ENCODE measurements at regions of chr5 and their contacts with region 1.

Region 1: DNA sequence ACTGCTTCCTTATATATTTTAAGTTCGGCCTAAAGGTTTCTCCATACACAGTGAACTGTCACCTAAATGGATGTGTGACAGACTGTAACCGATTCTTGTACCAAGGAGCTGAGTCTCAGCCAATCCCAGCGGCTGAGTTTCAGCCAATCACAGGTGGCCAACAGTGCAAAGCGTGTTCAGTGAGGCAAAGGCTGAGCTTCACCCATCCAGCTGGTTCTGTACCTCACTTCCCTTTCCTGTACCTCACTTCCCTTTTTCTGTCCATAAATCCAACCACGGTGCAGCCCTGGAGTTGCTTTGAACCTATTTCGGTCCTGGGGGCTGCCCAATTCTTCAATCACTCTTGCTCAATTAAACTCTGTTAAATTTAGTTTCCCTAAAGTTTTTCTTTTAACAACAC is 15.7 kb upstream of the TBC1D9B start:
- H3K4me3 Mint-ChIP-seq: no peak overlapping the region
- H3K27ac Mint-ChIP-seq: no peak overlapping the region
- H3K4me1 Mint-ChIP-seq: peaks cover 13% of the 10 kb centered on the region
- H3K27me3 Mint-ChIP-seq: no peaks in the 10 kb centered on the region

Region 2: DNA sequence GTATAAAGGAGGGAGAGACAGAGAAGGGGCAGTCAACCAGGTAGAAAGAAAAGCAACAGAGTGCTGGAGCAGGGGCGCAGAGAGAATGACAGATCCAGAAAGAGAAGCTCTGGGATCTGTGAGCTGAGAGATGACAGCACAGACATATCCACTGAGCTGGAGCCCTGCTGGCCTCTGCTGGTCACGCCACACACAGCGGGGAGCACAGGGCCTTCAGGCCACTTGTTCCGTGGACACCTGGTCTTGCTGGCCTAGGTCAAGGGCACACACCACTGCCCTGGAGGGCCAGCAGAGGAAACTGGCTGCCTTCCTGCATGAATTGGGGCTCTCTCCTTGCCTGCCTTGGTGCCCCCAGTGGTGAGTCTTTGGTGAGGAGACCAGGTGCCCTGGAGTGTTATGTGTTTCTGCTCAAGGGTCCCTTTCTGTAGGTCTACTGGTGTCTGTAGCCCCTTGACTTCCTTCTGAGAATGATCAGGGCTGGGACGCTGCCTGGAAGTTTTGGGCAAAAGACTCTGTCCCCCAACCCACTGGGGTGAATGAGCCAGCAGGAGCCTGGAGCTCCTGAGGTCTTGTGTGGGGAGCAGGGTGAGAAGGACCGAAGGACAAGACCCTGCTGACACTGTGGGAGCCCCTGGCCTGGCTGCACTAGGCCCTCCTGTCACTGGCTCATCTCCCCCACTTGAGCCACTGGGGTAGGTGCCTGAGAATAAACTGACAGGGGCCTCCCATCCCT is 518.9 kb before region 1 on chr5:
- intact Hi-C with region 1: no loop called
- H3K4me3 Mint-ChIP-seq: no peak overlapping the region
- H3K27ac Mint-ChIP-seq: no peak overlapping the region
- H3K4me1 Mint-ChIP-seq: no peaks in the 10 kb centered on the region
- H3K27me3 Mint-ChIP-seq: peaks cover 2% of the 10 kb centered on the region

Region 3: GRCh38 chr5:179959641-179960040 is 36.2 kb after region 1 on chr5:
- intact Hi-C with region 1: loop called (anchors 5 kb)
- H3K4me3 Mint-ChIP-seq: no peak overlapping the region
- H3K27ac Mint-ChIP-seq: no peak overlapping the region
- H3K4me1 Mint-ChIP-seq: peaks cover 54% of the 10 kb centered on the region
- H3K27me3 Mint-ChIP-seq: no peaks in the 10 kb centered on the region

Measured in dendritic cell treated with granulocyte-macrophage colony-stimulating factor and Interleukin-4, amounts not matched to agents 40 ng/mL and 50 ng/mL, for 4 days (primary cell).